ENCODE measurements at regions of chr1 and their contacts with region 1.

Region 1: DNA sequence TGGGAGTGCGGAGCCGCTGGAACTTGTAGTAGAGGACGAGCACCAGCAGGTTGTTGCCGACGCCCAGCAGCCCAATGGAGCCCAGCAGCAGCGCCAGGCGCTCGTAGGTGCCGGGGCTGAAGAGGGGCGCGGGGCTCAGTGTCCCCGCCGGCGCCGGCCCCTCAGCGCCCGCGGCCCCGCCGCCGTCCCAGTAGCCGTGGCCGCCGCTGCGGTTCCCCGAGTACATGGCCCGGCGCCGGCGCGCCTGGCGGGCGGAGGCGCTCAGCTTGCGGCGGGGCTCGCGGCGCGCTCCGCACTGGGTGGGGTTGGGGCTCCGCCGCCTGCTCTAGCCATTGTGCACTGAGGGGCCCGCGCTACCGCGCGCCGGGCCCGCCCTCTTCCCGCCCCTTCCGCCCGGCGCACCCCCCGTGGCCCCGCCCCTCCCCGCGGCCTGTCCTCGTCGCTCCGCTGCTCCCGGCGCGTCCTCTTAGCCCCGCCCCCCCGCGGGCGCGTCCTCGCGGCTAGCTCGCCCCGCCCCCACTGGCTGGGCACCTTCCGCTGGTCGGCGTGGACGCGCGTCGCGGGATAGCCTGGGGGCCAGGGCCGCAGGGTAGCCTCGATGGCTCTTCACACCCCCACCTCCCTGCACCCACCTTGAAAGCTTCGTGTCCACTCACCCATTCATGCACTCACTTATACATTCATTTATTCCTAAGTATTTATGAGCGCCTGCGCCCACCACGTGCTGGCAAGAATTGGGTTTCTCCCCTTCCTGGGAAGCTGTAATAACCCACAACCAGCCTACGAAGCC is at the starts of genes CHML and OPN3:
- DNase-seq: peak; percentile 97
- ATAC-seq: peak; percentile 100
- total RNA-seq, gene CHML: 6.6 TPM
- total RNA-seq, gene OPN3: 7.0 TPM

Region 2: GRCh38 chr1:241519308-241520079 is 120.7 kb before region 1 on chr1 and contains the start of gene FH:
- intact Hi-C with region 1: loop called (anchors 5 kb)
- DNase-seq: peak; percentile 98
- ATAC-seq: peak; percentile 100
- total RNA-seq, gene FH: 235 TPM

Region 3: DNA sequence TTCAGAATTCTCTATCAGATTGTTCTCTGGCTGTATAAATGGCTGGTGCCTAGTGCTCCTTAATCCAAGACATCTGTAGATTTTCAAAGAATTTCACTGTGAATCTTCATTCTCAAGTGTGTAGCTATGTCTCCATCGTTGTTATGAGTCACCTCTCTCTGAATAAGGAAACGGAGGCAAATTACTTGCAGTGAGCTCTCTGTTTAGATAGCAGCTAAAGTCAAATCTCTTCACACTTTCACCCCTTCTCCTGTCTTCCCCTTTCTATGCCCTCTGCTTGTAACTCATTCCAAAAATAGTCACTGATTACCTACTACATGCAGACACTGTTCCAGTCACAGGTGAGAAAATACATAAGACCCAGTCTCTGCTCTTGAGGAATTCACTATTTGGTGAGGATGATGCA is 39.7 kb before region 1 on chr1:
- intact Hi-C with region 1: no loop called
- DNase-seq: no peak
- ATAC-seq: no peak

Region 4: GRCh38 chr1:241622669-241623068 is 17.6 kb before region 1 on chr1:
- intact Hi-C with region 1: no loop called
- DNase-seq: no peak
- ATAC-seq: peak; percentile 59

Measured in Right ventricle myocardium inferior (tissue), 1 donor.